OCI-LY7 (cell line): ENCODE measurements at regions of chr3 and their contacts with region 1.

Region 1: DNA sequence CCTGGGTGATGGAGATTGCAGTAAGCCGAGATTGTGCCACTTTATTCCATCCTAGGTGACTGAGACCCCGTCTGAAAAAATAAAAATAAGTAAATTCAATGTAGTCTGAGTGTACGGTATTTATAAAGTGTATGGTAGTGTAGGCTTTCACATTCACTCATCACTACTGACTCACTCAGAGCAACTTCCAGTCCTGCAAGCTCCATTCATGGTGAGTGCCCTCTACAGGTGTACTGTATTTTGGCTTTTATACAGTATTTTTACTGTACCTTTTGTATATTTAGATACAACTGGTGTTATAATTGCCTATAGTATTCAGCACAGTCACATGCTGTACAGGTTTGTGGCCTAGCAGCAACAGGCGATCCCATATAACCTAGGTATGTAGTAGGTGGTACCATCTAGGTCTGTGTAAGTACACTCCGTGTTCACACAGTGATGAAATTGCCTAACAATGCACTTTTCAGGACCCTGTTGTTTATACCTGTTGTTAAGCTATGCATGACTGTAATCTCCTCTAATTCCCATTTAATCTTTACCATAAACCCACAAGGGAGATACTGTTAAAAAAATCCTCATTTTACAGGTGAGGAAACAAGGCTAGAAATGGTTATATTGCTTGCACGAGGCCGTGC is 19.3 kb downstream of the CACNA1D start:
- DNase-seq: no peak
- H3K4me3 ChIP-seq: no peak overlapping the region
- H3K27ac ChIP-seq: no peak overlapping the region
- H3K4me1 ChIP-seq: no peaks in the 10 kb centered on the region
- CTCF ChIP-seq: peak; percentile 69

Region 2: DNA sequence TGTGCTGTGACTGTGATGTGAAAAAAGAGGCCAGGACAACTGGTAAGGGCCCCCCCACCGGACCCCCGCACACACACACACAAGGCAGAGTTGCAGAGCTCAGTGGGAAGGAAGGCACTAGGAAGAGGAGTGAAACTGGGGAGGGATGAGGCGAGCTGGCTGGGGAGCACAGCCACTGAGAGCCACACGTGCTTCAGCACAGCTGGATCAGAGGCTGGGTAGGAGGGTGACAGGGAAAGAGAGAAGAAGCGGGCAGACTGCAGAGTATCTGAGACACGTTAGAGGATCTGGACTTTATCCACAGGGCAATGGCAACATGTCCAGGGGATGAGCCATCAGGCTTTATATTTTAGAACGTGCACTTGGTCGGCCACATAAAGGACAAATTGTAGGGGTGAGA is 219.8 kb before region 1 on chr3:
- CTCF ChIA-PET with region 1: no interaction called
- POLR2A ChIA-PET with region 1: no interaction called
- intact Hi-C with region 1: loop called (anchors 10 kb)
- DNase-seq: no peak
- H3K4me3 ChIP-seq: no peak overlapping the region
- H3K27ac ChIP-seq: no peak overlapping the region
- H3K4me1 ChIP-seq: no peaks in the 10 kb centered on the region
- CTCF ChIP-seq: no peak